Activated CD4-positive, alpha-beta T cell treated with anti-CD3 and anti-CD28 coated beads, Interleukin-2, amount 10 ng/mL, durations not matched to agents 24 days and 14 days (primary cell): ENCODE measurements at regions of chr19 and their contacts with region 1.

Region 1: DNA sequence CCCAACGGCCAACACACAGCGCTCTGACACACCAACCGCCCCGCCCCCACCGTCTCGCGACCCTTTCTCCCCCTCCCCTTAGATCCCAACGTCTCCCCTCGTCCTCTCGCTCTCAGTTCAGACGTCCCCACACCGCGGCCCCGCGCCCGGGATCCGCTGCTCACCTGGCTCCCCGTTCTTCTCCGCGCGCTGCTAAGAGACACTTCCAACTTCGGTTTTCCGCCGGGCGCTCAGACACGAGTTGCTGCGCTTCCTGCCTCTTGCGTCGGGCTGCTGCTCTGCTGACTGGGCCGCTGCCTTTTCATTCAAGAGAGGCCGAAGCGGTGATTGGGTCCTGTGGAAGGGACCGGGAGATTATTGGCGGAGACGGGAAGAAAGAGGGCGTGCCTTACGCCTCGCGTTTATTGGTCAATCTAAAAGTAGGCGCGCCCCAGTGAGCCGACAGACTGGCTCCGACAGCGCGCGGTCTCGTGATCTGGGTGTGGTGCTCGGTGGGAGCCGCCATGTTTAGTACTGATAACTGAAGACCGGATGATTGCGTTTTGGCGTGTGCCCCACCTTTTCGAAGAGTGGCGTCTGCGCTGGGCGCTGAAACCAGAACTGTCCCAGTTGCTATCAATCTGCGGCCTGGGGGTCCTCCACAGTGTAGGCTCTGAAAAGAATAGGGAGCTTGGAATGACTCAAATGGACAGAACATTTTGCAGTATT is at the start of gene DDX39A:
- DNase-seq: peak; percentile 99
- H3K4me3 Mint-ChIP-seq: peak within 1 kb of the TSS; percentile 97
- H3K27ac Mint-ChIP-seq: peak within 1 kb of the TSS; percentile 99
- H3K4me1 Mint-ChIP-seq: peaks cover 28% of the 10 kb centered on the region
- H3K27me3 Mint-ChIP-seq: peaks cover 3% of the 10 kb centered on the region
- total RNA-seq, gene DDX39A: 274 and 280 TPM in 2 replicates

Region 2: DNA sequence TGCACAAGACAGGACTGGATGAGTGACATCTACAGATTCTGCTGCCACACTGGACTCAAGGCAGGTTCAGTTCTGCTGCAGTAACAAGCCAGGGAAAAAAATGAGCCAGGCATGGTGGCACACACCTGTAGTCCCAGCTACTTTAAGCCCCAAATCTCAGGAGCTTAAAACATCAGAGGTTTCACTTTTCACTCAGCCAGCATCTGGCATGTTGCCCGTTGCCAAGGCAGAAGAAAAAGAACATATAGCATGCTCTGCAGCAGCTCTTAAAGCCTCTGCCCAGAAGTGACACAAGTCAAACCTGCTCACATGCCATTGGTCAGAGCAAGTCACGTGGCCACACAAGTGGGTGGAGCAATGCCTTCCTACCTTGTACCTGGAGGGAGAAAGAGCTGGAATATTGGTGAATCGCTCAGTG is 52.8 kb before region 1 on chr19:
- intact Hi-C with region 1: loop called (anchors 2 kb)
- DNase-seq: peak; percentile 97
- H3K4me3 Mint-ChIP-seq: peak overlapping the region; percentile 72
- H3K27ac Mint-ChIP-seq: peak overlapping the region; percentile 96
- H3K4me1 Mint-ChIP-seq: peaks cover 59% of the 10 kb centered on the region
- H3K27me3 Mint-ChIP-seq: no peaks in the 10 kb centered on the region

Region 3: GRCh38 chr19:14432791-14433553 is 13.7 kb after region 1 on chr19 and contains the start of gene PKN1:
- intact Hi-C with region 1: loop called (anchors 2 kb)
- DNase-seq: peak; percentile 90
- H3K4me3 Mint-ChIP-seq: peak within 1 kb of the TSS; percentile 84
- H3K27ac Mint-ChIP-seq: peak within 1 kb of the TSS; percentile 82
- H3K4me1 Mint-ChIP-seq: peaks cover 35% of the 10 kb centered on the region
- H3K27me3 Mint-ChIP-seq: peaks cover 12% of the 10 kb centered on the region
- total RNA-seq, gene PKN1: 172 and 180 TPM in 2 replicates